IMR-90 (cell line): ENCODE measurements at regions of chr1 and their contacts with region 1.

Region 1: DNA sequence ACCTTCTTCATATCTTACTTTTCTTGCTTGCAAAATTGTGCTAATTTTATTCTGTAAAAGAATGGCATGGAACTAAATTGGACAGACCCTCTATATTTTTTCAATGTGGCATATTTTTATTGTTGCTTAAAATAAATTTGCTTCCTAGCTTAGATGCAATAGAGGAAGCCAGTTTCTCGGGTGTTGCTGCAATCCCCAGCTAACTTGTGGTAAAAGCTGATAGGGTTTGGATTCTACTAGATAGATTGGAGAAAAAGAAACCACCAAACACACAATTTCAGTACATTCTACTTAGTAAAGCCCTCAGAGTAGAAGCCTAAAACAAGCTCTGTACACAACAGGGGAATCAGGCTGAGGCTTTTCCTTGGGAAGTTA is 49.5 kb upstream of the GCLM start:
- DNase-seq: no peak
- ATAC-seq: no peak
- H3K4me3 ChIP-seq: no peak overlapping the region
- H3K27ac ChIP-seq: no peak overlapping the region
- H3K4me1 ChIP-seq: peaks cover 4% of the 10 kb centered on the region; the same call in 1 of the 2 replicates
- H3K27me3 ChIP-seq: peaks cover 12% of the 10 kb centered on the region
- CTCF ChIP-seq: no peak
- POLR2A ChIP-seq: no peak
- RAD21 ChIP-seq: no peak

Region 2: DNA sequence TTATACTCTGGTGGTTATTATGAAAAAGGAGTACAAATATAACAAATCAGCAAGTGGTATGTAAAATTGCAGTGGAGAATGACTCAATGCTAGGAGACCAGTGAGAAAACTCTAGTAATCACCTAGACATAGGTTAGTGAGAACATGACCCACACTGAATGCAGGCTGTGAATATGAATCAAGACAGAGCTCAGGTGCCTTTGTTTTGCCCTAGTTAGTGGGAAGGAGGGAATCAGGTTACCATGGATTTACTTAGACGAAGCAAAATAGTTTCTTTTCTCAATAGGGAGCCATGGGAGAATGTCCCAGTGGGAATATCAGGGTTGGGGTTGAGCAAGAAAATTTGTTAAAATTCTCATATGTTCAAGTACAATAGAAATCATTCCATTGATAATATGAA is 38.9 kb before region 1 on chr1:
- CTCF ChIA-PET with region 1: no interaction called
- POLR2A ChIA-PET with region 1: no interaction called
- dilution Hi-C with region 1: no loop called
- in situ Hi-C with region 1: no loop called
- intact Hi-C with region 1: loop called (anchors 5 kb)
- DNase-seq: no peak
- ATAC-seq: no peak
- H3K4me3 ChIP-seq: no peak overlapping the region
- H3K27ac ChIP-seq: no peak overlapping the region
- H3K4me1 ChIP-seq: no peaks in the 10 kb centered on the region
- H3K27me3 ChIP-seq: peaks cover 8% of the 10 kb centered on the region
- CTCF ChIP-seq: no peak
- POLR2A ChIP-seq: no peak
- RAD21 ChIP-seq: no peak